ENCODE measurements at regions of chr1 and their contacts with region 1.

Region 1: GRCh38 chr1:26145041-26145959 is 13.6 kb upstream of the FAM110D start:
- DNase-seq: peak; percentile 64 to 79 (median 75)
- H3K4me3 ChIP-seq: no peak overlapping the region
- H3K27ac ChIP-seq: no peak overlapping the region
- H3K4me1 ChIP-seq: no peaks in the 10 kb centered on the region
- H3K27me3 ChIP-seq: no peaks in the 10 kb centered on the region
- CTCF ChIP-seq: peak; percentile 35 to 61 (median 61)
- EP300 ChIP-seq: no peak
- POLR2A ChIP-seq: no peak

Region 2: GRCh38 chr1:25971066-25971810 is 174.1 kb before region 1 on chr1:
- intact Hi-C with region 1: no loop called
- DNase-seq: no peak
- H3K4me3 ChIP-seq: no peak overlapping the region
- H3K27ac ChIP-seq: no peak overlapping the region
- H3K4me1 ChIP-seq: no peaks in the 10 kb centered on the region
- H3K27me3 ChIP-seq: no peaks in the 10 kb centered on the region
- CTCF ChIP-seq: no peak
- EP300 ChIP-seq: no peak
- POLR2A ChIP-seq: no peak

Region 3: GRCh38 chr1:26035959-26036755 is 109.1 kb before region 1 on chr1:
- intact Hi-C with region 1: loop called (anchors 2 to 10 kb)
- DNase-seq: peak; percentile 80 to 92 (median 87)
- H3K4me3 ChIP-seq: peak overlapping the region; percentile 54
- H3K27ac ChIP-seq: peak overlapping the region; percentile 72 to 90
- H3K4me1 ChIP-seq: peaks cover 1% of the 10 kb centered on the region
- H3K27me3 ChIP-seq: no peaks in the 10 kb centered on the region
- CTCF ChIP-seq: peak; percentile 98 to 99 (median 99)
- EP300 ChIP-seq: no peak
- POLR2A ChIP-seq: no peak

Region 4: GRCh38 chr1:26041293-26041800 is 104.0 kb before region 1 on chr1:
- intact Hi-C with region 1: loop called (anchors 2 to 10 kb)
- DNase-seq: peak in 1 of 5 donors; percentile 5
- H3K4me3 ChIP-seq: no peak overlapping the region
- H3K27ac ChIP-seq: no peak overlapping the region
- H3K4me1 ChIP-seq: no peaks in the 10 kb centered on the region
- H3K27me3 ChIP-seq: peaks cover 3% of the 10 kb centered on the region
- CTCF ChIP-seq: no peak
- EP300 ChIP-seq: no peak
- POLR2A ChIP-seq: no peak

Region 5: GRCh38 chr1:26102526-26102925 is 42.8 kb before region 1 on chr1:
- intact Hi-C with region 1: loop called in 3 of 4 experiments (anchors 5 kb)
- DNase-seq: no peak
- H3K4me3 ChIP-seq: no peak overlapping the region
- H3K27ac ChIP-seq: no peak overlapping the region
- H3K4me1 ChIP-seq: no peaks in the 10 kb centered on the region
- H3K27me3 ChIP-seq: no peaks in the 10 kb centered on the region
- CTCF ChIP-seq: no peak
- EP300 ChIP-seq: no peak
- POLR2A ChIP-seq: no peak

Region 6: DNA sequence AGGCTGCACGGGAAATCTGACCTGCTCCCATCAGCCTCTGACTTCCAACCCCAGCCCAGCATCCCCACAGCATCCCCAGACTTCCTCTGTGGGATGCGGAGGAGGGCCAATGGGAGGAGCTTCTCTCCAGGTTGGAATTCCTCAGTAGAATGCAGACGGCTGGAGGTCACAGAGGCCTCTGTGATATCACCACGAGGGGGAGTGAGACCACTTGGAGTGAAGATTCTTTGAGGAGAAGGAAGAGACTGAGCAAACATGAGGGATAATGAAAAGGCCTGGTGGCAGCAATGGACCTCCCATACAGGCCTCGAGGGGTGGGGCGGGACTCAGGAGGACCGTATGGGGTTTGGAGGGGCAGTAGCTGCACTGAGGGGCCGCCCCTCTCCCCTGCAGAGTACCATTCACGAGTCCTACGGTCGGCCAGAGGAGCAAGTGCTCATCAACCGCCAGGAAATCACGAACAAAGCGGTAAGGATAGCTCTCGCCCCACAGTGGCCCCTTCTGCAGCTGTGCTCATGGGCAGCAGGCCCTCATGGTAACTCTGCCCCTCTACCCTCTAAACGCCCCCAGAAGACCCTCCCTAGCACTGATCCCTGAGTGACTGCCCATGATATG is 45.2 kb after region 1 on chr1 and contains the start of gene CATSPER4:
- intact Hi-C with region 1: no loop called
- DNase-seq: no peak
- H3K4me3 ChIP-seq: no peak within 1 kb of the TSS
- H3K27ac ChIP-seq: no peak within 1 kb of the TSS
- H3K4me1 ChIP-seq: no peaks in the 10 kb centered on the region
- H3K27me3 ChIP-seq: no peaks in the 10 kb centered on the region
- CTCF ChIP-seq: no peak
- EP300 ChIP-seq: no peak
- POLR2A ChIP-seq: no peak
- total RNA-seq, gene CATSPER4: not detected

Region 7: DNA sequence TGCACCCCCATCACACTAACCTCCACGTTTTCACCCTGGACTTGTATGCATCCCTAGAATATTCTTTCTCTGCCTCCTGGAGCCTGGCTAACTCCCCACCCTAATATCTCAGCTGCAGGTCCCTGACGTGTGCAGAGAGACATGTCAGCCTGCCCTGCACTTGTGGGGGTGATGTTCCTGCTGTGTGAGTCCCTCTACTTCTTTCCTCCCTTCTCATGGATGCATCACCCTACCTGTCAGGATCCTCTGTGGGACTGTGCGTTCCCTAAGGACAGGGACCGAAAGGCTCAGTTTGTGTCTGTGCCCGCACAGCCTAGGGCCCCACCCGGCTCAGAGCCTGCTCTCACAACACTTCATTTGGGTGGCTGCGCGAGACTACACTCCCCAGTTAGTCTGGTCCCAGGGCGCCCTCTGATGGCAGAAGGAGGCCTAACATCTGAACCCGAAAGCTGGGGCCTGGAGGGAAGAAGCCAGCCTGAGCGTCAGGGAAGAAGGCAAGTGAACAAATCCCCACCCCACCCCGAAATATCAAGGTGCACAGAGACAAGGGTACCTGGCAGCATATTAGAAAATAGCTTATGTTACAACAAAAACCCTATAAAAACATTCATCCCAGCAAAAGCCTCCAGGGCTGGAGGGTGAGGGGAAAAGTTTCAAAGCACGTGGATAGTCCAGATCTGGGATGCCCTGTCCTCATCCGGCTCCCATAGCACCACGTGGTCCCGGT is 176.2 kb after region 1 on chr1:
- intact Hi-C with region 1: no loop called
- DNase-seq: peak; percentile 81 to 91 (median 88)
- H3K4me3 ChIP-seq: no peak overlapping the region
- H3K27ac ChIP-seq: no peak overlapping the region
- H3K4me1 ChIP-seq: no peaks in the 10 kb centered on the region
- H3K27me3 ChIP-seq: no peaks in the 10 kb centered on the region
- CTCF ChIP-seq: peak; percentile 46 to 85 (median 80)
- EP300 ChIP-seq: no peak
- POLR2A ChIP-seq: no peak